ENCODE measurements at regions of chr1 and their contacts with region 1.

Region 1: GRCh38 chr1:230066466-230067404 is at the start of gene GALNT2:
- DNase-seq: peak; percentile 86 to 91 (median 89)
- ATAC-seq: peak; percentile 96
- H3K4me3 ChIP-seq: peak within 1 kb of the TSS; percentile 59
- H3K4me3 Mint-ChIP-seq: peak within 1 kb of the TSS; percentile 88 to 97 (median 92)
- H3K27ac ChIP-seq: peak within 1 kb of the TSS; percentile 82
- H3K27ac Mint-ChIP-seq: peak within 1 kb of the TSS; percentile 88 to 97 (median 91)
- H3K4me1 ChIP-seq: no peaks in the 10 kb centered on the region
- H3K4me1 Mint-ChIP-seq: peaks cover 15 to 48% (median 38%) of the 10 kb centered on the region in 7 donors
- H3K27me3 ChIP-seq: no peaks in the 10 kb centered on the region
- H3K27me3 Mint-ChIP-seq: peaks cover 0 to 10% (median 0%) of the 10 kb centered on the region in 5 donors
- total RNA-seq, gene GALNT2: 18.7 to 32.7 (median 26.4) TPM

Region 2: GRCh38 chr1:229270547-229271447 is 795.9 kb before region 1 on chr1 and contains the start of gene RAB4A:
- CTCF ChIA-PET with region 1: no interaction called
- POLR2A ChIA-PET with region 1: no interaction called
- intact Hi-C with region 1: loop called in 1 of 2 experiments (anchors 5 kb)
- DNase-seq: peak; percentile 48 to 85 (median 75)
- ATAC-seq: peak; percentile 94
- H3K4me3 ChIP-seq: peak within 1 kb of the TSS; percentile 77
- H3K4me3 Mint-ChIP-seq: peak within 1 kb of the TSS; percentile 89 to 99 (median 94)
- H3K27ac ChIP-seq: peak within 1 kb of the TSS; percentile 62
- H3K27ac Mint-ChIP-seq: peak within 1 kb of the TSS; percentile 76 to 95 (median 89)
- H3K4me1 ChIP-seq: peaks cover 13 to 17% of the 10 kb centered on the region in 2 donors
- H3K4me1 Mint-ChIP-seq: peaks cover 25 to 45% (median 35%) of the 10 kb centered on the region in 7 donors
- H3K27me3 ChIP-seq: no peaks in the 10 kb centered on the region
- H3K27me3 Mint-ChIP-seq: no peaks in the 10 kb centered on the region
- total RNA-seq, gene RAB4A: 24.0 to 47.9 (median 36.9) TPM

Region 3: GRCh38 chr1:229625915-229626831 is 440.6 kb before region 1 on chr1 and contains the starts of genes TAF5L and URB2:
- CTCF ChIA-PET with region 1: no interaction called
- POLR2A ChIA-PET with region 1: no interaction called
- intact Hi-C with region 1: loop called (anchors 1 kb)
- DNase-seq: peak; percentile 81 to 91 (median 85)
- ATAC-seq: peak; percentile 97
- H3K4me3 ChIP-seq: peak within 1 kb of the TSS; percentile 93
- H3K4me3 Mint-ChIP-seq: peak within 1 kb of the TSS; percentile 94 to 100 (median 98)
- H3K27ac ChIP-seq: peak within 1 kb of the TSS; percentile 80
- H3K27ac Mint-ChIP-seq: peak within 1 kb of the TSS; percentile 93 to 98 (median 97)
- H3K4me1 ChIP-seq: peaks cover 21 to 27% of the 10 kb centered on the region in 2 donors
- H3K4me1 Mint-ChIP-seq: peaks cover 39 to 69% (median 59%) of the 10 kb centered on the region in 7 donors
- H3K27me3 ChIP-seq: no peaks in the 10 kb centered on the region
- H3K27me3 Mint-ChIP-seq: no peaks in the 10 kb centered on the region
- total RNA-seq, gene TAF5L: 17.3 to 27.2 (median 19.8) TPM
- total RNA-seq, gene URB2: 6.2 to 18.2 (median 11.0) TPM

Region 4: DNA sequence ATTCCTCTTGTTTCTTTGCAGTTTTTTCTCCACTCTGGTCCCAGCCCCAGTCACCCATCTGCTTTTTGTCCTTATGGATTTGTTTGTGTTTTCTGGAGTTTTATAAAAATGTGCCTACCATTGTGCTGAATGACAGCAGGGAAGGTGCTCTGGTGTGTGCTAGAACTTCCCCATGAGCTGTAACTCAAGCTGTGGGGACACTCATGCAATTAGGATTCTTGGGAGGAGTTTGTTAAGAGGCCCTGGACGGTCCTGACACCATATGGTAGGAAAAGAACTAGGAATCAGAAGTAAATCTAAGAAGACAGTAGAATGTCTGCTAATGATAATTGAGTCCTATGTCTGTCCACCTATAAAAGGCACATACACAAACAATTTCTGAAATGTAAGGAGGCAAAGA is 413.3 kb before region 1 on chr1:
- CTCF ChIA-PET with region 1: no interaction called
- POLR2A ChIA-PET with region 1: no interaction called
- intact Hi-C with region 1: no loop called
- DNase-seq: no peak
- ATAC-seq: no peak
- H3K4me3 ChIP-seq: no peak overlapping the region
- H3K4me3 Mint-ChIP-seq: no peak overlapping the region
- H3K27ac ChIP-seq: no peak overlapping the region
- H3K27ac Mint-ChIP-seq: peak overlapping the region in 2 of 9 donors; percentile 43 to 57
- H3K4me1 ChIP-seq: no peaks in the 10 kb centered on the region
- H3K4me1 Mint-ChIP-seq: peaks cover 0 to 6% (median 0%) of the 10 kb centered on the region in 7 donors
- H3K27me3 ChIP-seq: no peaks in the 10 kb centered on the region
- H3K27me3 Mint-ChIP-seq: no peaks in the 10 kb centered on the region

Region 5: DNA sequence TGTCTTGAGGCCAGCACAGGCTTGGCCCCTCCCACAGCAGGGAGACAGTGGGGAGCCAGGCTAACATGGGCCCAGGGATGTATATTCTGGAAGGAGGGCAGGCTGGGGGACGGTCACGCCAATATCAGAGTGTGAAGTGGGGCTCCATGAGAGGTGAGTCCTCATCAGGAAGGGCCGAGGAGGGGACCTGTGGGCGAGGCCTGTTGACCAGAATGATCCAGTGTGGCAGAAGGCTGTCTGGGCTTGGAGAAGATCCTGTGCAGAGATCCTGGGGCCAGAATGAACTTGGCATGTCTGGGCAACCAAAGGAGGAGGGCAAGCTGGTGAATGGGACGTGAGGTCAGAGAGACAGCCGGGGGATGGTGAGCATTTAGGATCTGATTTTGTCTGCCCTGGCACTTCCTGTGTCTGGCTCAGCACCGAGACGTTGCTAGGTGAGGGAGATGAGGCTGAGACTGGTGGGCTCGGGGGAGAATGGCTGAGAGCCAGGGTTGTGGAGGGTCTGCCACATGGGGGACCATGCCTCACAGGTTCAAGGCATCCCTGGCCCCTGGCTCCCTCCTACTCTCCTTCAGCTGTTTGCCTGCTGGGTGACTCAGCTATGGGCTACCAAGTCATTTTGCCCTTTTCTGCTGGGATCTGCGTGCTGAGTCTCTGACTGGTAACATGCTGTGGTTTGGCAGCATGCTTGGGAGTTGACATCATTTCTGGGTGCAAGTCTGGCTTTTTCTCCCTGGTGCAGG is 17.6 kb after region 1 on chr1:
- CTCF ChIA-PET with region 1: no interaction called
- POLR2A ChIA-PET with region 1: interaction called, 5 read pairs
- intact Hi-C with region 1: loop called in 1 of 2 experiments (anchors 2 kb)
- DNase-seq: peak in 2 of 9 donors; percentile 8 to 66
- ATAC-seq: peak; percentile 29
- H3K4me3 ChIP-seq: no peak overlapping the region
- H3K4me3 Mint-ChIP-seq: peak overlapping the region in 9 of 10 donors; percentile 8 to 64 (median 35)
- H3K27ac ChIP-seq: no peak overlapping the region
- H3K27ac Mint-ChIP-seq: peak overlapping the region in 7 of 9 donors; percentile 12 to 73 (median 71)
- H3K4me1 ChIP-seq: peaks cover 0 to 11% of the 10 kb centered on the region in 2 donors
- H3K4me1 Mint-ChIP-seq: peaks cover 44 to 82% (median 60%) of the 10 kb centered on the region in 7 donors
- H3K27me3 ChIP-seq: no peaks in the 10 kb centered on the region
- H3K27me3 Mint-ChIP-seq: peaks cover 0 to 5% (median 0%) of the 10 kb centered on the region in 5 donors

Region 6: DNA sequence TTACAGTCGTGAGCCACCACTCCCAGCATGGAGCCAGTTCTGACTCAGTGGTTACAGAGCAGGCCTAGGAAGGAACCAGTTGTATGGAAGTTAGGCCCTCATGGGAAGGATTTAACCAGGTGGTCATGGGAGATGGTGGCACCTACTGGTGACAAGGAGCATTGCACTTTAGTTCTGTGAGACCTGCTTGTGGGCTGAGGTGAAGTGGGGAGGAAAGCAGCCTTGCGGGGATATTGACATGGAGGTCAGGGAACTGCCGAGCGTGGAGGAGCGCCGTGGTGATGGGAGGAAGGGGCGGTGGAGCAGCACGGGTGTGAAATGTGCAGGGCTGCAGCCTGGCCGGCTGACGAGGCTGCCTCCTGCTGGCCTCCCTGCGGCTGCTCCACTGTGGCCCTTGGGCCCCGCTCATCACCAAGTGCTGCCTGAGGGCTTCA is 100.7 kb after region 1 on chr1:
- CTCF ChIA-PET with region 1: no interaction called
- POLR2A ChIA-PET with region 1: no interaction called
- intact Hi-C with region 1: loop called (anchors 5 kb)
- DNase-seq: peak in 8 of 9 donors; percentile 21 to 50 (median 33)
- ATAC-seq: peak; percentile 77
- H3K4me3 ChIP-seq: no peak overlapping the region
- H3K4me3 Mint-ChIP-seq: peak overlapping the region in 2 of 10 donors; percentile 7 to 36
- H3K27ac ChIP-seq: no peak overlapping the region
- H3K27ac Mint-ChIP-seq: peak overlapping the region in 1 of 9 donors; percentile 48
- H3K4me1 ChIP-seq: no peaks in the 10 kb centered on the region
- H3K4me1 Mint-ChIP-seq: peaks cover 23 to 34% (median 31%) of the 10 kb centered on the region in 7 donors
- H3K27me3 ChIP-seq: no peaks in the 10 kb centered on the region
- H3K27me3 Mint-ChIP-seq: no peaks in the 10 kb centered on the region

Region 7: DNA sequence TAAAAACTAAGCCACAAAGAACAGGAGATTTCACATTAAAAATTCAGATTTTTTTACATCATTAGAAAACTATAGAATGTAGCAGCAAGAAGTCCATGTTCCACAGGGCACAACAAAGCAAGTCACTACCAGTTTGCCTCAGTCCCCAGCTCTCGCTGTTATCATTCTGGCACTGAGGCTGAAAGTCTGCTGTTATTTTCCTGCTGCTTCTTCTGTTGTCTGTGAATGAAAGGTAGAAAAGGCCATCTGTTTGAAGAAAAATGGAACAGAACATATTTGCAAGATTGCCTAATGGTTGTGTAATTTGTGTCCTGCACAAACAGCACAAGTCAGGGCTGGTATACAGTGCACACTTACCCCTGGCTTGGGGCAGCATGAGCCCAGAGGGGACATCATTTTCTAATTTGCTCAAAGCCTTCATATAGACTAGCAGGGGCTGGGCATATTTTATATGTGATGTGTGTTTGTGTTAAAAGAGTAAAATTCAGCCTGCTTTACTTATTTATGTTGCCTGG is 470.0 kb after region 1 on chr1:
- CTCF ChIA-PET with region 1: no interaction called
- POLR2A ChIA-PET with region 1: no interaction called
- intact Hi-C with region 1: no loop called
- DNase-seq: no peak
- ATAC-seq: no peak
- H3K4me3 ChIP-seq: no peak overlapping the region
- H3K4me3 Mint-ChIP-seq: no peak overlapping the region
- H3K27ac ChIP-seq: no peak overlapping the region
- H3K27ac Mint-ChIP-seq: no peak overlapping the region
- H3K4me1 ChIP-seq: no peaks in the 10 kb centered on the region
- H3K4me1 Mint-ChIP-seq: peaks cover 0 to 3% (median 0%) of the 10 kb centered on the region in 7 donors
- H3K27me3 ChIP-seq: no peaks in the 10 kb centered on the region
- H3K27me3 Mint-ChIP-seq: peaks cover 6 to 26% (median 11%) of the 10 kb centered on the region in 5 donors

Region 8: DNA sequence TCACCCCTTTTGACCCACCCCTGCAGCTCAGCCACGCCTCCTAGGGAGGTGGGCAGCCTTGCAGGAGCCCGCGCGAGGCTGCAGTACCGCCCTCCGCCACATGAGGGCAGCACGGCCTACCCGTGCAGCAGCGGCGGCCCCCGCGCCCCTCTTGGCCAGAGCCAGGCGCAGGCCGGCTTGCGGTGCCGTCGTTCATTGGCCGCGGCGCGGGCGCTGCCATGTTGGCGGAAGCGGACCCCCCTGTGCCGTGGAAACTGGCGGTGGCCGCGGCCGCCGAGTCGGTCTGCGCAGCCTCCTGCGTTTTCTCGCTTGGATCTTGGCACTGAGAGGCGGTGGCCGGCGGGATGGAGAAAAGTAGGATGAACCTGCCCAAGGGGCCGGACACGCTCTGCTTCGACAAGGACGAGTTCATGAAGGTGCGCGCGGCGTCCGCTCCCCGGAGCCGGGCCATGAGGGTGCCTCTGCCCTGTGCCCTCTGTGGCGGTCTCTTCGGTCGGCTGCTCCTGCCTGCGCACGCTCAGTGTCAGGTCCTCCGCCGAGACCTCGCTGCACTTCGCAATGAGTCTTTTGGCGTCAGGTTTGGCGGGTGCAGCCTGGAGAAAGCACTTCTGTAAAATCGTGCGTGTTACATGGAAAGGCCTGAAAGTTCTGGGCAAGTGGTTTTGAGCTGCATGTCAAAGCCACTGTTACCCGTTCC is 575.7 kb after region 1 on chr1 and contains the start of gene COG2:
- CTCF ChIA-PET with region 1: no interaction called
- POLR2A ChIA-PET with region 1: no interaction called
- intact Hi-C with region 1: loop called (anchors 5 kb)
- DNase-seq: peak; percentile 84 to 100 (median 91)
- ATAC-seq: peak; percentile 99
- H3K4me3 ChIP-seq: peak within 1 kb of the TSS; percentile 56
- H3K4me3 Mint-ChIP-seq: peak within 1 kb of the TSS; percentile 90 to 100 (median 96)
- H3K27ac ChIP-seq: peak within 1 kb of the TSS; percentile 76
- H3K27ac Mint-ChIP-seq: peak within 1 kb of the TSS; percentile 81 to 98 (median 93)
- H3K4me1 ChIP-seq: peaks cover 20 to 24% of the 10 kb centered on the region in 2 donors
- H3K4me1 Mint-ChIP-seq: peaks cover 36 to 56% (median 48%) of the 10 kb centered on the region in 7 donors
- H3K27me3 ChIP-seq: peaks cover 0 to 7% of the 10 kb centered on the region in 2 donors
- H3K27me3 Mint-ChIP-seq: peaks cover 0 to 24% (median 12%) of the 10 kb centered on the region in 5 donors
- total RNA-seq, gene COG2: 21.6 to 47.5 (median 34.7) TPM

Region 9: DNA sequence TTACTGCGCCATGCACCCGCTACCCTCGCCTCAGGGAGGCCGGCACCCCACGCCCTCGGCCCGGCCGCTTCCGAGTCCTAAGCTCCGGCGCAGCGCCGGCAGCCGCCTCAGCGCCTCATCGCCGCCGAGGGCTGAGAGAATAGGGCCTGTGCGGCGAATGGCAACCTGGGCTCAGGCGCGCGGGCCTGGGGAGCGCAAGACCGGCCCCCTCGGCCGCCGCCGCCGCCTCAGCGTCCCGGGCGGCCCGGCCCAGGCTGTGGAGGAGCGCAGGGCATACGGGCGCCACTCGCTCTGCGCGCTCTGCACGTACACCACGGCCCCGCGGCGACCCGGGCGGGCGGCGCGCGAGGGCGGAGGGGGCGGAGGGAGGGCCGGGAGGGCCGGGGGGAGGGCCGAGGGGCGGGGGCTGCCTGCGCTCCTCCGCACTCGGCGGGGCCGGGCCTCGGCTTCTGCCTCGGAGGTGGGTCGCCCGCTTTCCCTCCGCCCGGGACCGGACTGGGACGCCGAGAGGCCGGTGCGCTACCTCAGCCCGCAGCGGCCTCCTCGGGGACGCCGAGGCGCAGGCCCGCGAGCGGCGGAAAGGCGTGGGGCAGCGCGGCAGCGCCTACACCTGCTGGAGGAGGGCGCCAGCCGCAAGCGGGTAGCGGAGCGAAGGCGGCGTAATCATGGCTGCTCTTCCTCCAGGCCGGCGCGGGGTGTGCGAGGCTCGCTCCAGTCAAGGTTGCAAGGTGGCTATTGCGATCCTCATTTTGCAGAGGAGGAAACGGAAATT is 1355.4 kb after region 1 on chr1 and contains the start of gene EGLN1:
- CTCF ChIA-PET with region 1: no interaction called
- POLR2A ChIA-PET with region 1: no interaction called
- intact Hi-C with region 1: loop called in 1 of 2 experiments (anchors 5 kb)
- DNase-seq: peak; percentile 73 to 86 (median 83)
- ATAC-seq: peak; percentile 92
- H3K4me3 ChIP-seq: peak within 1 kb of the TSS; percentile 86
- H3K4me3 Mint-ChIP-seq: peak within 1 kb of the TSS; percentile 89 to 97 (median 92)
- H3K27ac ChIP-seq: peak within 1 kb of the TSS; percentile 80
- H3K27ac Mint-ChIP-seq: peak within 1 kb of the TSS; percentile 82 to 97 (median 91)
- H3K4me1 ChIP-seq: peaks cover 28 to 34% of the 10 kb centered on the region in 2 donors
- H3K4me1 Mint-ChIP-seq: peaks cover 36 to 56% (median 46%) of the 10 kb centered on the region in 7 donors
- H3K27me3 ChIP-seq: no peaks in the 10 kb centered on the region
- H3K27me3 Mint-ChIP-seq: peaks cover 0 to 32% (median 0%) of the 10 kb centered on the region in 5 donors
- total RNA-seq, gene EGLN1: 13.6 to 38.9 (median 23.0) TPM

Measured in naive thymus-derived CD4-positive, alpha-beta T cell (primary cell).